ENCODE measurements at regions of chrX and their contacts with region 1.

Region 1: GRCh38 chrX:70133303-70134115 is at the start of gene IGBP1:
- DNase-seq: peak; percentile 89
- ATAC-seq: peak; percentile 87
- H3K4me3 Mint-ChIP-seq: peak within 1 kb of the TSS; percentile 99
- H3K27ac Mint-ChIP-seq: peak within 1 kb of the TSS; percentile 98
- H3K4me1 Mint-ChIP-seq: peaks cover 43% of the 10 kb centered on the region
- H3K27me3 Mint-ChIP-seq: no peaks in the 10 kb centered on the region
- total RNA-seq, gene IGBP1: 44.5 to 45.3 TPM

Region 2: GRCh38 chrX:70030301-70030767 is 103.2 kb before region 1 on chrX:
- CTCF ChIA-PET with region 1: interaction called, 13 read pairs
- POLR2A ChIA-PET with region 1: interaction called, 4 read pairs
- DNase-seq: peak; percentile 58
- ATAC-seq: peak; percentile 61
- H3K4me3 Mint-ChIP-seq: no peak overlapping the region
- H3K27ac Mint-ChIP-seq: no peak overlapping the region
- H3K4me1 Mint-ChIP-seq: peaks cover 18% of the 10 kb centered on the region
- H3K27me3 Mint-ChIP-seq: no peaks in the 10 kb centered on the region

Region 3: DNA sequence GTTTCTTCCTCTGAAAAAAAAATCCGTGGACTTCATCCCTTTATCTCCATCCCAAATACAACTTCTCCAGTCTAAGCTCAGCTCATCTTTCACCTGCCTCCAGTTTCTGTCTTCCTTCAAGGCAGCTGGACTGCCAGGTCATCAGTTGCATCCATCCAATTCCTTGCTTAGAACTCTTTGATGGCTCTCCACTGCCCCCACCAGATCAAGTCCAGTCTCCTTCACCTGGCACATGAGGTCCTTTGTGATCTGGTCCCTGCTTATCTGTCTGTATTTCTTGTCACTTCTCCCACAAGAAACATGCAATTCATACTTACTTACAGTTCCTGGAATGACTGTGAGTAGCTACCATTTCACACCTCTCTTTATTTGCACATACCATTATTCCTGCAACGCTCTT is 37.5 kb before region 1 on chrX:
- CTCF ChIA-PET with region 1: interaction called, 11 read pairs
- POLR2A ChIA-PET with region 1: no interaction called
- DNase-seq: no peak
- ATAC-seq: no peak
- H3K4me3 Mint-ChIP-seq: no peak overlapping the region
- H3K27ac Mint-ChIP-seq: no peak overlapping the region
- H3K4me1 Mint-ChIP-seq: no peaks in the 10 kb centered on the region
- H3K27me3 Mint-ChIP-seq: peaks cover 2% of the 10 kb centered on the region

Region 4: DNA sequence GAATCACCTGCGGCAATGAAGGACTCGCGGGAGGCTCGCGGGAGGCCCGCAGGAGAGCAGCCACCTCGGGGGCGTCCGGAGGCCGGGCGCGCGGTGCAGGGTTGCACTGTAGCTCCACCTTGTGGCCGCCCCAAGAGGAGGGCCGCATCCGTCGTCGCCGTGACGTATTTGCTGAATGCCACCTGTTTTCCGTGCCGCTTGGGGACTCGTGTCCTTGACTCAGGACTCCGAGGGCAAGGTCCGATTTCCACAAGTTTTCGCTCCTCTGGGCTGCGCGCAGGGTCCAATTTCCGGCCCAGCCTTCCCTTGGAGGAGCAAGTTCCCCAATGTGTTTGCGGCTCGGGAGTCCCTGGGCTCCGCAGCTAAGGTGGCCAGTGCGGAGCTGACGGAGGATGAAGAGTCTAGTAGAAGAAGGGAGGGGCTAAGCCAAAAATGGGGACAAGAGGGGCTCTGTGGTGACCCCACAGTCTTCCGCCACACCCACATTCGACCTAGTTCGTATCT is 300.4 kb after region 1 on chrX:
- CTCF ChIA-PET with region 1: interaction called, 15 read pairs
- POLR2A ChIA-PET with region 1: no interaction called
- DNase-seq: peak; percentile 84
- ATAC-seq: peak; percentile 85
- H3K4me3 Mint-ChIP-seq: peak overlapping the region; percentile 86
- H3K27ac Mint-ChIP-seq: peak overlapping the region; percentile 89
- H3K4me1 Mint-ChIP-seq: peaks cover 36% of the 10 kb centered on the region
- H3K27me3 Mint-ChIP-seq: peaks cover 5% of the 10 kb centered on the region